ENCODE measurements at regions of chr7 and their contacts with region 1.

Region 1: DNA sequence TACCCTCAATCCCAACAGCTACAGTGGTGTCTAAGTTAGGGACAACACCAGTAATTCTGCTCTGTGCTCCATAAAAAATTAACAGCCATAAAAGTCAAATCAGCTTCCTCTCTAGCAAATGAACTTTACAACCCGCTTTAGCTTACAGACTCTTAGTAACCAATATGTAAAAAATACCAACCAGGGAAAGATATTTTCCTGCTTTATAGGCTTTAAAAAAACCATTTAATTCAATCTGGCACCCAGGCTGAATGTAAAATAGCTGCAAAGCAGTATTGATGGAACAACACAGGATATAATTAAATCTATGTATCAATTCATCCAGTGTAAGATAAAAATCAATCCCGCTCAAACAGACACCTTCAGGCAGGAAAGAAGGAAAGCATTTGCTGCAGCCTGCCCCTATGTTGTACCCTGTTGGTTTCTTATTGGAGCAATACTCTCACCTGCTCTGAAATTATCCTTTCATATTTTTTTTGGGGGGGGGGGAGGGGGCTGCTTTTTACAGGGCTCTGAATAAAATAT is 98.6 kb downstream of the NXPH1 start:
- DNase-seq: no peak
- H3K4me3 ChIP-seq: no peak overlapping the region
- H3K27ac ChIP-seq: no peak overlapping the region
- H3K4me1 ChIP-seq: no peaks in the 10 kb centered on the region
- H3K27me3 ChIP-seq: no peaks in the 10 kb centered on the region
- CTCF ChIP-seq: no peak
- POLR2A ChIP-seq: no peak

Region 2: GRCh38 chr7:8404079-8404478 is 128.0 kb before region 1 on chr7:
- intact Hi-C with region 1: no loop called
- DNase-seq: no peak
- H3K4me3 ChIP-seq: no peak overlapping the region
- H3K27ac ChIP-seq: no peak overlapping the region
- H3K4me1 ChIP-seq: no peaks in the 10 kb centered on the region
- H3K27me3 ChIP-seq: peaks cover 0 to 18% of the 10 kb centered on the region in 2 donors
- CTCF ChIP-seq: no peak
- POLR2A ChIP-seq: no peak

Region 3: DNA sequence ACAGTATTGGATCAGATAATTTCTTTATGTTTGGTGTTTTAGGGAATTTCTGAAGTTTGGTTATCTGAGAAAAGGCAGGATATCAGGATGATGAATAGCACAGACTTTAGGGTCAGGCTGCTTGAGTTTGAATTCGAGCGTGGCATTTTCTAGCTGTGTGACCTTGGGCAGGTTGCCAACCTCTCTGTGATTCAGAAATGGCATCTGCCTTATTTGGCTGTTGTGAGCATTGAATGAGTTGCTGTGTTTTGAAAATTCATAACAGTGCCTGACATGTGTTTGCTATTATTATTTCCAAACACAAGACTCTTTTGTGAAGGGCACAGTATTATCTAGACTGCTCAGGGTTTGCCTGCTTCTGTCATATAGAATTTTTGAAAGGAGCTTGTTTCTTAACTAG is 31.8 kb before region 1 on chr7:
- intact Hi-C with region 1: loop called (anchors 1 kb)
- DNase-seq: no peak
- H3K4me3 ChIP-seq: no peak overlapping the region
- H3K27ac ChIP-seq: no peak overlapping the region
- H3K4me1 ChIP-seq: no peaks in the 10 kb centered on the region
- H3K27me3 ChIP-seq: no peaks in the 10 kb centered on the region
- CTCF ChIP-seq: no peak
- POLR2A ChIP-seq: no peak